ENCODE measurements at regions of chr7 and their contacts with region 1.

Region 1: GRCh38 chr7:90403174-90404113 is at the start of gene CLDN12:
- DNase-seq: peak; percentile 87 to 93 (median 89)
- ATAC-seq: peak; percentile 95 to 98 (median 96)
- H3K4me3 ChIP-seq: peak within 1 kb of the TSS; percentile 44 to 87 (median 78)
- H3K27ac ChIP-seq: peak within 1 kb of the TSS; percentile 77 to 97 (median 94)
- H3K4me1 ChIP-seq: peaks cover 0 to 36% (median 11%) of the 10 kb centered on the region in 12 donors
- H3K27me3 ChIP-seq: no peaks in the 10 kb centered on the region
- CTCF ChIP-seq: no peak
- POLR2A ChIP-seq: peak in 1 of 2 donors; percentile 69
- total RNA-seq, gene CLDN12: 20.7 to 45.2 (median 32.2) TPM

Region 2: GRCh38 chr7:90346336-90347125 is 56.9 kb before region 1 on chr7 and contains the start of gene GTPBP10:
- intact Hi-C with region 1: loop called in 9 of 10 experiments (anchors 1 to 10 kb)
- DNase-seq: peak; percentile 94 to 97 (median 95)
- ATAC-seq: peak; percentile 100
- H3K4me3 ChIP-seq: peak within 1 kb of the TSS; percentile 57 to 86 (median 77)
- H3K27ac ChIP-seq: peak within 1 kb of the TSS; percentile 14 to 87 (median 81)
- H3K4me1 ChIP-seq: peaks cover 0 to 20% (median 12%) of the 10 kb centered on the region in 12 donors
- H3K27me3 ChIP-seq: no peaks in the 10 kb centered on the region
- CTCF ChIP-seq: peak; percentile 53 to 91 (median 69)
- POLR2A ChIP-seq: peak in 1 of 2 donors; percentile 74
- total RNA-seq, gene GTPBP10: 8.2 to 28.4 (median 20.0) TPM